ENCODE measurements at regions of chr12 and their contacts with region 1.

Region 1: DNA sequence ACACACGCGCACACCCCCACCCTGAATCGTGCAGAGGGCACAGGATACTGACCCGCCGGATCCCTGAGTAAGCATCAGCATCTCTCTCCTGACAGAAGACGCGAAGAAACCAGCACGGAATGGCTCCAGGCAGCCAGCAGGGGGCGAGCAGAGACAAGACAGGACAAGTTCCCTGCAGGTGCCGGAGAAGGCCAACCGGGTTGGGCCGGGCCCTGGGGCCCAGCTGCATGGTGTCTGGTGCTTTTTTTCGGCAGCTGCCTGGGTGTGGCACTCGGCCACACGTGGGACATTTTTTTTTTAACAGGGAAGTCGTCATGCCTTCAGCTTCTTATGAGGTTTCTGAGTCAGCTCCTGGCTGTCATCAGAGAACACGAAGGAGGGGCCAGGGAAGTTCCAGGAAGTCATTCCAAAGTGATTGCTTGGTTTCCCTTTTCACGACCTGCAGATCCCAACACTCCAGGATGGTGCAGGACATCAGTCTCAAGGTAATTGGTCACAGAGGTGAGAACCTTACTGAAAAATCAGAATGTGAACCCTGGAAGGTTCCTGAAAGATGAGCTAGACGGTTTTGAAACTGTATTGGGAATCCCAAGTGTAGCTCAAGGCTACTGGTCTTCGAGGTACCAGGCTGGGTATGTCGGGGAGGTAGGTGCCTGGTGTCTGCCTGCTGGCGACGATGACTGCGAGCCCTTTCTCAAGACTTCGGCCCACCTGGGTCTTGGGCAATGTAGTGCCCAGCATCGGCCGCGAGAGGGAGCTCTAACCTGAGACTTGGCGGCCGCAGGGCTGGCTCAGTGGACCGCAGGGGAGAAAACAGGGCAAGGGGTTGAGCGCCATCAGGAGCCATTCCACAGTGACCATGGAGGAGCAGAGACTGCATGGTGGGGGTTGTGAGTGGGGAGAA is 190.8 kb upstream of the PRMT8 start:
- DNase-seq: peak; percentile 89
- ATAC-seq: peak; percentile 86
- H3K4me3 Mint-ChIP-seq: peak overlapping the region; percentile 28
- H3K27ac Mint-ChIP-seq: peak overlapping the region; percentile 62
- H3K4me1 Mint-ChIP-seq: peaks cover 11% of the 10 kb centered on the region
- H3K27me3 Mint-ChIP-seq: peaks cover 19% of the 10 kb centered on the region
- CTCF ChIP-seq: peak; percentile 86

Region 2: GRCh38 chr12:3152011-3152511 is 148.1 kb before region 1 on chr12:
- CTCF ChIA-PET with region 1: interaction called, 11 read pairs
- POLR2A ChIA-PET with region 1: no interaction called
- intact Hi-C with region 1: no loop called
- DNase-seq: no peak
- ATAC-seq: no peak
- H3K4me3 Mint-ChIP-seq: no peak overlapping the region
- H3K27ac Mint-ChIP-seq: no peak overlapping the region
- H3K4me1 Mint-ChIP-seq: peaks cover 5% of the 10 kb centered on the region
- H3K27me3 Mint-ChIP-seq: peaks cover 14% of the 10 kb centered on the region
- CTCF ChIP-seq: no peak

Region 3: GRCh38 chr12:3313675-3314663 is 13.8 kb after region 1 on chr12:
- CTCF ChIA-PET with region 1: interaction called, 70 read pairs
- POLR2A ChIA-PET with region 1: no interaction called
- intact Hi-C with region 1: no loop called
- DNase-seq: peak; percentile 35
- ATAC-seq: peak; percentile 85
- H3K4me3 Mint-ChIP-seq: no peak overlapping the region
- H3K27ac Mint-ChIP-seq: no peak overlapping the region
- H3K4me1 Mint-ChIP-seq: no peaks in the 10 kb centered on the region
- H3K27me3 Mint-ChIP-seq: no peaks in the 10 kb centered on the region
- CTCF ChIP-seq: peak; percentile 32

Region 4: GRCh38 chr12:3436461-3437065 is 136.4 kb after region 1 on chr12:
- CTCF ChIA-PET with region 1: interaction called, 10 read pairs
- POLR2A ChIA-PET with region 1: no interaction called
- intact Hi-C with region 1: no loop called
- DNase-seq: no peak
- ATAC-seq: no peak
- H3K4me3 Mint-ChIP-seq: no peak overlapping the region
- H3K27ac Mint-ChIP-seq: no peak overlapping the region
- H3K4me1 Mint-ChIP-seq: peaks cover 8% of the 10 kb centered on the region
- H3K27me3 Mint-ChIP-seq: no peaks in the 10 kb centered on the region
- CTCF ChIP-seq: no peak

Region 5: DNA sequence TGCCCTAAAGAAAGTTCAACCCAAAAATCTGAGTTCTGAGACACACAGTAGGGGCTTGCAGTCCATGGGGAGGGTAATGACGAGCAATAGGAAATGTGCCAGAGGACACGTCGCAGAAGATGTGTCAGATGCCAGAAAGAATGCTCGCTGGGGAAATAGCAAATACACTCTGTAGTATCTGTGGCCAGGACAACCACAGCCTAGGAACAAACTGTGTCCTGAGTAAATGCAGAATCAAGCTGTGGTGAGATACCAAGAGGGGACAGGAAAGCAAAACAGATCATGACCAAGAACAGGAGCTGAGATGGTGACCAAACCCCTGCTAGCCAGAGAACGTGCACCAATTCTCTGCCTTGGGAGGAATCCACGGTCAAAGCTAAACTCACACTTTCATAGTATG is 443.6 kb after region 1 on chr12:
- CTCF ChIA-PET with region 1: interaction called, 12 read pairs
- POLR2A ChIA-PET with region 1: no interaction called
- intact Hi-C with region 1: no loop called
- DNase-seq: peak; percentile 75
- ATAC-seq: peak; percentile 71
- H3K4me3 Mint-ChIP-seq: no peak overlapping the region
- H3K27ac Mint-ChIP-seq: peak overlapping the region; percentile 79
- H3K4me1 Mint-ChIP-seq: peaks cover 49% of the 10 kb centered on the region
- H3K27me3 Mint-ChIP-seq: no peaks in the 10 kb centered on the region
- CTCF ChIP-seq: no peak

Region 6: GRCh38 chr12:3803865-3804472 is 503.8 kb after region 1 on chr12:
- CTCF ChIA-PET with region 1: interaction called, 57 read pairs
- POLR2A ChIA-PET with region 1: interaction called, 3 read pairs
- intact Hi-C with region 1: loop called (anchors 5 kb)
- DNase-seq: peak; percentile 86
- ATAC-seq: peak; percentile 74
- H3K4me3 Mint-ChIP-seq: no peak overlapping the region
- H3K27ac Mint-ChIP-seq: no peak overlapping the region
- H3K4me1 Mint-ChIP-seq: peaks cover 10% of the 10 kb centered on the region
- H3K27me3 Mint-ChIP-seq: no peaks in the 10 kb centered on the region
- CTCF ChIP-seq: peak; percentile 92

Measured in activated CD8-positive, alpha-beta T cell treated with anti-CD3 and anti-CD28 coated beads for 36 hours (primary cell).